Cardiac septum (tissue), 1 donor: ENCODE measurements at regions of chr20 and their contacts with region 1.

Region 1: DNA sequence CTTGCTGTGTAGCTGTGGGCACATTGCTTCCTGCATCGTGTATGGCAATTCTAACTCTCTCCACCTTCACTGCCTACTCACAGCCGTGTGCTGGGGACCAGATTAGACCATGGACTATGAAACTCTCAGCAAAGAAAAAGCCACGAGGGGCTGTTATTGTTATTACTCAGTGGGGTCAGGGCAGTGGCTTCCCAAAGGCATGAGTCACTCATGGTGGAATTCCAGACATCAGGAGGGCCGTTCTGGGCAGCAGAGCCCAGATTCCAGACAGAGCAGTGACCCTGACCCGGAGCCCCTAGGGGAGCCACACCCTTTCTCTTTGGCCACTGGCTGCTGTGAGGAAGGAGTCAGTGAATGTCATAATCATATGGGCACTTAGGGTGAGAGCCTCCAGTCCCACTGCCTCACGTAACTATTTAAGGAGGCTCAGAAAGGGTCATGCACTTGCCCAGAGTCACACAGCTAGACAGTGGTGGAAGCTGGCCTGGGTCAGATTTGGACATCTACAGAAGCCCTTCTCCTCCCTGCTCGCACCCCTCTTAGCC is 22.2 kb upstream of the CCN5 start:
- DNase-seq: peak; percentile 87

Region 2: GRCh38 chr20:44540834-44541233 is 152.2 kb before region 1 on chr20:
- intact Hi-C with region 1: no loop called
- DNase-seq: no peak

Region 3: GRCh38 chr20:44576297-44576696 is 116.7 kb before region 1 on chr20:
- intact Hi-C with region 1: loop called (anchors 5 kb)
- DNase-seq: no peak